ENCODE measurements at regions of chr14 and their contacts with region 1.

Region 1: DNA sequence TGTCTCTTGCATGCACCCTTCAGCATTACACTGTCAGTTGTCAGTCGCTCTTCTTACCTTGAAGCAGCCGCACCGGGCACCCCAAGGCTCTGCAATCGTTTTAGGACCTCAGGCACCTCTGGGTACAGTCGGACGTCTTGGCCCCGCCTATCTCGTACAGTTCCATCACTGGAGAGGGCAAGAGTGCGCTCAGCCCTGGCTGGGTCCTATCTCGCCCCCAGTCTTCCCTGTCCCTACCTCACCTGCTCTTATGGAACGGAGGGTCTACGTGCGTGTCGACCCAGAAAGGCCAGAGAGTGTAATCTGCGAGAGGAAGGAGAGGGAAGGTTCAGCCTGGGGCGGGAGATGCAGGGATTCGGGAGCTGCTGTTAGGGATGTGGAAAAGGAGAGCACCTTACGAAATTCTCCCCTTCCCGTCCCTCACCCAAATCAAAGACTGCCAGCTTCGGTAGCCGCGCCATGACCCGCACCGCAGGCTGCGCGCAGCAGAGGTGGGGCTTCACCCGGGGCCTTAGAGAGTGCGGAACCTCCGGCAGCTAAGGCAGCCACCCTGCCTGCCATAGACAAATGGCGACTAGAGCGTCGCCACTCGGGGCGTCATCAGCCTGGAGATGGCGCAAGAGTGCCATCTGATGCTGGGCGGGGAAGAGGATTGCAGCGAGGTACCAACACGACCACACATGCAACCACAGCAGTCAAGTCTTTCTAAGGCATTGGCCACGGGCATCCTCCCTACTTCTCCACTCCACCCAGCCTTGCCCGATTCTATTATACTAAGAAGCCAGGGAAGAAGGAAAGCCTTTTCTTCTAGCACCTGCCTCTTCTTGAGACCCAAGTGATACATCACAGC is at the start of gene MDP1:
- DNase-seq: peak; percentile 82
- H3K4me3 Mint-ChIP-seq: peak within 1 kb of the TSS; percentile 92
- H3K27ac Mint-ChIP-seq: peak within 1 kb of the TSS; percentile 98
- H3K4me1 Mint-ChIP-seq: peaks cover 22% of the 10 kb centered on the region
- H3K27me3 Mint-ChIP-seq: no peaks in the 10 kb centered on the region
- total RNA-seq, gene MDP1: 13.2 and 13.5 TPM in 2 replicates

Region 2: DNA sequence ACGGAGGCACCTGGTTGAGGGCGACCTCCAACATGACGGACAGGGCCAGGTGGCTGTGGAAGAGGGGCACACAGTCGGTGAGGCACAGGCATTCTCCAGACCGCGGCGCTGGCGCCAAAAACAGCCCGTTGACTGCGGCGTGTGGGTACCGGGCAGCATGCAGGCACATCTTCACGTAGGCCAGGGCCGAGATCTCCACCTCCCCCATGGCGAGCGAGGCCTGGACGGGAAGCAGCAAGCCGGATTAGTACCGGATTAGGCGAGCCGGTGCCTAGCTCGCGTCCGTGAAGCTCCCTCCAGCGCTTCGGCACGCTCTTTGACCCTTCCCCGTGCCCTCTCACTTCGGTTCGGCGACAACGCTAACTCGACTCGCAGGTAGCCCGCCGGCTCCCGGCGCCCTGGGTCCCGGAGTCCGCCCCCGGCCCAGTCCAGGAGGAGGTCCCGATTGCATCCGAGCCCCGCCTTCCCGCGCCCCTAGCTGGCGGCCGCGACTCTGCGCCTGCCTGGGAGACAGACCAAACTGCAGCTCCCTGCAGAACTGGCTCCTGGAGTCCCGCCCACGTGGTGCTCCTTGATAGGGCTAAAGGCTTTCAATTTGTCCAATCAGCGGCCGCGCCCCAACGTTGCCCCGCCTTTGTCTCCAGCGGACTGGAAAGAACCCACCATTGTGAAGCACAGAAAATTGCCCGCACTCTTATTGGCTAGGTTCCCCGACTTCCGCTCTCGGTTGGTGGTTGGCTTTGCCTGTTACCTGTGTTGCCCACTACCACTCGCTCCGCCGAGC is 74.4 kb before region 1 on chr14 and contains the start of gene EMC9:
- intact Hi-C with region 1: loop called (anchors 5 kb)
- DNase-seq: peak; percentile 100
- H3K4me3 Mint-ChIP-seq: peak within 1 kb of the TSS; percentile 91
- H3K27ac Mint-ChIP-seq: peak within 1 kb of the TSS; percentile 79
- H3K4me1 Mint-ChIP-seq: peaks cover 58% of the 10 kb centered on the region
- H3K27me3 Mint-ChIP-seq: no peaks in the 10 kb centered on the region
- total RNA-seq, gene EMC9: 26.4 and 30.4 TPM in 2 replicates

Region 3: GRCh38 chr14:24195191-24196070 is 20.3 kb before region 1 on chr14 and contains the start of gene TM9SF1:
- intact Hi-C with region 1: loop called (anchors 1 kb)
- DNase-seq: peak; percentile 84
- H3K4me3 Mint-ChIP-seq: peak within 1 kb of the TSS; percentile 98
- H3K27ac Mint-ChIP-seq: peak within 1 kb of the TSS; percentile 97
- H3K4me1 Mint-ChIP-seq: peaks cover 38% of the 10 kb centered on the region
- H3K27me3 Mint-ChIP-seq: no peaks in the 10 kb centered on the region
- total RNA-seq, gene TM9SF1: 27.8 and 30.8 TPM in 2 replicates

Region 4: DNA sequence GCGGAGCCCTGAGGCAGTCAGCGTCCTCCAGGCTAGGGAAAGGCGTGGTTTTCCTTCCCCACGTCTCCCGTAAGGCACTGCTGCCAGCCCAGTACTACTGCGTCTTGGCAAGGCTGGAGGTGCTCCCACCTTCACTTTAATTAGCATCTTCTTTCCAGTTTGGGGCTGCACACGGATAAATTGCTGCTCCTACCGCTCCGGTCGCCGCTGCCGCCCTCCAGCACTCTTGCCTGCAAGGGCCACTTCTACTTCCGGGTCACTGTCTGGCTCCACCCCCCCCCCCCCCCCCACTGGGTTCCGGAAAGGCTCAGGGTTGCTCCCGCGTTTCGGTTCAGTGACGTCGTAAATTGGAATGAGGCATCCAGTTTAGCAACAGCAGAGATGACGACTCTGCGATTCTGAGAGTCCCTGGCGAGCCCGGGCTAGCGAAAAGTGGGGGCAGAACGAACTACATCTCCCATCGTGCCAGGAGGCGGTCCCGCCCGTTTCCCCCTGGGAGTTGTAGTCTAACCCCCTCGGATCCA is 16.5 kb after region 1 on chr14 and contains the start of gene NEDD8:
- intact Hi-C with region 1: loop called (anchors 1 kb)
- DNase-seq: peak; percentile 89
- H3K4me3 Mint-ChIP-seq: peak within 1 kb of the TSS; percentile 97
- H3K27ac Mint-ChIP-seq: peak within 1 kb of the TSS; percentile 91
- H3K4me1 Mint-ChIP-seq: peaks cover 44% of the 10 kb centered on the region
- H3K27me3 Mint-ChIP-seq: no peaks in the 10 kb centered on the region
- total RNA-seq, gene NEDD8: 194 and 202 TPM in 2 replicates

Region 5: DNA sequence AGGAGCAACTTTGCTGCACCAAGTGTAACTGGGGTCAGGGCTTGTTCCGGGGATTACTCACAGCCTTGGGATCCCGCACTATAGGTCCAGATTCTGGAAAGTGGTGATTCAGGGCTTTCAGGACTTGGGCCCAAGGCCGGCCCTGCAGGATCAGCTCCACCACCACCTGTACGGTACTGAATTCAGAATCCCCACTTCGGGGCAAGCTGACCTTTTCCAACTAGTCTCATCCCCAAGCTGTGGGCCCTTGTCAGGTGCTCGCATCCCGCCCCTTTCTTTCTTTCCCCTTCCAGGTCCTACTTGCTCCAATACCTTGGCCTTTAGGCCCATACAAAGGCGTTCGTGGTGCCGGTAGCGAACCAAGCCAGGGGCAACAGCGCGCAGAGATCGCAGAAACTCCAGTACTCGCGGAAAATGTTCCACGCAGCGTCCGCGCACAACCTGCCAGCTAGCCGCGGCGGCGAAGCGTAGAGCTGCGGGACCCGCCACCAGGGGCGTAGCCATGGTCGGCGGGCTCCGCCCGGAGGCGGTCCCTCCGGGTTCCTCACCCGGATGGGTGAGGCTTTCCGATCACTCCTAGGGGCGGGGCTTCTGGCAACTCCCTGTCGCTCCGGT is 26.2 kb after region 1 on chr14:
- intact Hi-C with region 1: loop called (anchors 1 kb)
- DNase-seq: peak; percentile 93
- H3K4me3 Mint-ChIP-seq: peak overlapping the region; percentile 86
- H3K27ac Mint-ChIP-seq: peak overlapping the region; percentile 98
- H3K4me1 Mint-ChIP-seq: peaks cover 46% of the 10 kb centered on the region
- H3K27me3 Mint-ChIP-seq: no peaks in the 10 kb centered on the region

Region 6: GRCh38 chr14:24271134-24271833 is 55.6 kb after region 1 on chr14 and contains the start of gene RABGGTA:
- intact Hi-C with region 1: loop called (anchors 1 kb)
- DNase-seq: peak; percentile 87
- H3K4me3 Mint-ChIP-seq: peak within 1 kb of the TSS; percentile 86
- H3K27ac Mint-ChIP-seq: peak within 1 kb of the TSS; percentile 89
- H3K4me1 Mint-ChIP-seq: peaks cover 30% of the 10 kb centered on the region
- H3K27me3 Mint-ChIP-seq: no peaks in the 10 kb centered on the region
- total RNA-seq, gene RABGGTA: 33.9 and 38.4 TPM in 2 replicates

Region 7: GRCh38 chr14:24299255-24300195 is 83.8 kb after region 1 on chr14 and contains the starts of genes DHRS1 and NOP9:
- intact Hi-C with region 1: loop called (anchors 1 kb)
- DNase-seq: peak; percentile 89
- H3K4me3 Mint-ChIP-seq: peak within 1 kb of the TSS; percentile 90
- H3K27ac Mint-ChIP-seq: peak within 1 kb of the TSS; percentile 88
- H3K4me1 Mint-ChIP-seq: peaks cover 33% of the 10 kb centered on the region
- H3K27me3 Mint-ChIP-seq: no peaks in the 10 kb centered on the region
- total RNA-seq, gene DHRS1: 9.7 and 10.4 TPM in 2 replicates
- total RNA-seq, gene NOP9: 39.7 and 42.0 TPM in 2 replicates